MCF 10A (cell line): ENCODE measurements at regions of chr13 and their contacts with region 1.

Region 1: DNA sequence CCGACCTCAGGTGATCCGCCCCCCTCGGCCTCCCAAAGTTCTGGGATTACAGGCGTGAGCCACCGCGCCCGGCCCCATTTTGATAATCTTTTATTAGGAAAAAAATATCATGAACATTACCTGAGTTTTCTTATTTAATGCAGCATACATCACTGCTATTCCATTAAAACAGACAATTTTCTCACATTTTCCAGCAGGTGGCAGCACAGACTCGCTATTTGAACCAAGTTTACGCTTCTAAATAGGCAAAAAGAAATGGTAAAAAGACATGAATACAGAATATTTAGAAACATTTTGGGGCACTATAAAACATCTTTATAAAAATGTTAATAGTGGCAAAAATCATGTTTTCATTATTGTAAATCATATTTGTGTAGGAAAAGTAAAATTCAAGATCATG is 903.1 kb downstream of the SLITRK6 start:
- DNase-seq: peak; percentile 84
- H3K4me3 Mint-ChIP-seq: no peak overlapping the region
- H3K27ac Mint-ChIP-seq: no peak overlapping the region
- H3K4me1 Mint-ChIP-seq: no peaks in the 10 kb centered on the region
- H3K27me3 Mint-ChIP-seq: no peaks in the 10 kb centered on the region
- CTCF ChIP-seq: peak; percentile 59

Region 2: DNA sequence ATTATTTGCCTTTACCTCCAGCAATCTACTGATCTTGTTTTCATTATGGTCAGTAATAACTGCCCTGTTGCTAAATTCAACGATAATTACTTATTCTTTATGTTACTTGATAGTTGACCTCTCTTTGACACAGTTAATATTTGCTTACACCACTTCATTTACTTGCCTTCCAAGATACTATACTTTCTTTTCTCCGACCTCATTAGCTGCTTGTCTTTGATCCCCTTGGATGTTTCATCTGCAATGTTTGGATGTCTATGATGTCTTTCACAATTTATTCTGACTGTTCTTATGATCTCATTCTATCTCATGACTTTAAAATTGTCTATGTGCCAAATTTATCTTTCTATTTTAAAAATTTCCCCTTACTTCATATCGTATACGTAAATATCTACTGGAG is 1426.5 kb before region 1 on chr13:
- CTCF ChIA-PET with region 1: no interaction called
- POLR2A ChIA-PET with region 1: no interaction called
- intact Hi-C with region 1: no loop called
- DNase-seq: no peak
- H3K4me3 Mint-ChIP-seq: no peak overlapping the region
- H3K27ac Mint-ChIP-seq: no peak overlapping the region
- H3K4me1 Mint-ChIP-seq: peaks cover 7% of the 10 kb centered on the region
- H3K27me3 Mint-ChIP-seq: no peaks in the 10 kb centered on the region
- CTCF ChIP-seq: no peak

Region 3: DNA sequence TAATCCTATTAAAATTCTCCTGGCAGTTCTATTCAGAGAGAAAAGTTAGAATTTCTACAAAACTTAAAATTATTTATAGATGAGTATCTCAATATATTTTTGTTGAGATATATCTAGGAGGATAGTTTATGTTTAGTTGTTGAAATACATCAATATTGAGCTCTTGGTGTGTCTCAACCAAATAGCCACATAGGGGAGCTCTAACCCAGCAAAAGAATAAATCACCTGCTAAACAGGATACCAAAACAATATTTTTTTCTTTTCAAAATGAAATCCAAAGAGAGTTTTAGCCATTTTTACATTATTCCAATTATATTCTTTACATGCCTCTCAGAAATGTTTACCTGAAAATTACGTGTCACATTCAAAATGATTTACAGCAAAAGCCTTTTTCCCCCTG is 51.7 kb before region 1 on chr13:
- CTCF ChIA-PET with region 1: interaction called, 5 read pairs
- POLR2A ChIA-PET with region 1: no interaction called
- intact Hi-C with region 1: loop called (anchors 5 kb)
- DNase-seq: peak; percentile 60
- H3K4me3 Mint-ChIP-seq: no peak overlapping the region
- H3K27ac Mint-ChIP-seq: no peak overlapping the region
- H3K4me1 Mint-ChIP-seq: no peaks in the 10 kb centered on the region
- H3K27me3 Mint-ChIP-seq: no peaks in the 10 kb centered on the region
- CTCF ChIP-seq: peak; percentile 53

Region 4: DNA sequence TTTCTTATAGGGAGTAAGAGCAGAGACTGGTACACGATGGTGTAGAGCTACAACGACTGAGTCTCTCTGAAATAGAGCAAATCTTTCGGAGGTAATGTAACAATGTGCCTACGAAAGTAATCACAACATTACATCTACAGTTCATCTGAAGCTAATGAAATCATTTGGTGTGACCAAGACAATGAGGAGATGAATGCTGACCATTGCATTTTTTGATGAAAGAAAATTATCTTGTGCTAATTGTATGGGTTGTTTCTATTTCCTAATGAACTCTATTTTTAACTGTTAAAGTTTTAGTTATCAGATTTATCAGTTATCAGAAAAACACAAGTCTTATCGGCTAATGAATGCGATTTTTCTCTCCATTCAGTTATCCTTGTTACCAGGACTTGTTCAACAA is 10.3 kb before region 1 on chr13:
- CTCF ChIA-PET with region 1: interaction called, 15 read pairs
- POLR2A ChIA-PET with region 1: no interaction called
- intact Hi-C with region 1: no loop called
- DNase-seq: no peak
- H3K4me3 Mint-ChIP-seq: no peak overlapping the region
- H3K27ac Mint-ChIP-seq: no peak overlapping the region
- H3K4me1 Mint-ChIP-seq: no peaks in the 10 kb centered on the region
- H3K27me3 Mint-ChIP-seq: no peaks in the 10 kb centered on the region
- CTCF ChIP-seq: no peak

Region 5: GRCh38 chr13:85806553-85807175 is 910.5 kb after region 1 on chr13:
- CTCF ChIA-PET with region 1: interaction called, 11 read pairs
- POLR2A ChIA-PET with region 1: no interaction called
- intact Hi-C with region 1: loop called (anchors 1 kb)
- DNase-seq: peak; percentile 66
- H3K4me3 Mint-ChIP-seq: no peak overlapping the region
- H3K27ac Mint-ChIP-seq: no peak overlapping the region
- H3K4me1 Mint-ChIP-seq: no peaks in the 10 kb centered on the region
- H3K27me3 Mint-ChIP-seq: no peaks in the 10 kb centered on the region
- CTCF ChIP-seq: peak; percentile 57

Region 6: DNA sequence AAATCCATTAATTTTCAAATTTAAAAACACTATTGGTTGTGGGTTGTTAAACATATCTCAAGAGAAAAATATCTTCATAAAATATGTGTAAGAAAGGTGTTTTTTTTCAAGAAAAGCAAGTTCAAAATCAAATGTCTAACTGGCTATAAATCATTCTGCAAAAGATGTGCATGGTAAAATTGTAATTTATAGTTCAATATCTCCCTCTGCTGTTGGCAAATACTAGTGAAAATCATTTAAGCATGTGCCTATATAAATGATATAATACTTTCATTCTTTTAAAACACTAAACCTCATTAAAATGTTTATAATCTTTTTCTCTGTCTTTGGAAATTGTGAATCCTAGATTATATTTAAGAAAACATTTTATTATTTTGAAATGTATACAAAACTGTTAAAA is 920.3 kb after region 1 on chr13:
- CTCF ChIA-PET with region 1: interaction called, 9 read pairs
- POLR2A ChIA-PET with region 1: no interaction called
- intact Hi-C with region 1: loop called (anchors 1 kb)
- DNase-seq: peak; percentile 10
- H3K4me3 Mint-ChIP-seq: no peak overlapping the region
- H3K27ac Mint-ChIP-seq: no peak overlapping the region
- H3K4me1 Mint-ChIP-seq: peaks cover 5% of the 10 kb centered on the region
- H3K27me3 Mint-ChIP-seq: no peaks in the 10 kb centered on the region
- CTCF ChIP-seq: peak; percentile 24

Region 7: DNA sequence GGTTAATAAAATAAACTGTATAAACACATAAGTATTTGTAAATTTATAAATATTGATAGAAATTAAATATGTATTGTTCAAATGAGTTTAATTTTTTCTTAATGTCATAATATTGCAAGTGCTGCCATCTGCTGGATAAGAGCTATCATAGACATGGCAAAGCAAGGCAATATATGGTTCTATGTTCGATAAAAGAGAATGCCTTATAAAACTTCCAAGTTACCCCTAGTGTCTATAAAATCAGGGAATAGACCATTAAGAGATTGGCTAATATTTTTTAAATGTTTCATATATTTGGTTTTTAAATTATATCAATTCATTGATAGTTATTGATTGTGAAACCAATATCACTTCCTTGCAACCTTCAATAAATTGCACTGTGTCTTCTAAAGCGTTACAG is 932.0 kb after region 1 on chr13:
- CTCF ChIA-PET with region 1: interaction called, 14 read pairs
- POLR2A ChIA-PET with region 1: no interaction called
- intact Hi-C with region 1: no loop called
- DNase-seq: peak; percentile 42
- H3K4me3 Mint-ChIP-seq: no peak overlapping the region
- H3K27ac Mint-ChIP-seq: no peak overlapping the region
- H3K4me1 Mint-ChIP-seq: no peaks in the 10 kb centered on the region
- H3K27me3 Mint-ChIP-seq: no peaks in the 10 kb centered on the region
- CTCF ChIP-seq: peak; percentile 47